ENCODE measurements at regions of chr20 and their contacts with region 1.

Region 1: GRCh38 chr20:3679749-3680700 is 1.8 kb downstream of the ADAM33 start:
- DNase-seq: no peak
- ATAC-seq: no peak
- H3K4me3 Mint-ChIP-seq: no peak overlapping the region
- H3K27ac Mint-ChIP-seq: no peak overlapping the region
- H3K4me1 Mint-ChIP-seq: peaks cover 7% of the 10 kb centered on the region
- H3K27me3 Mint-ChIP-seq: peaks cover 40% of the 10 kb centered on the region
- CTCF ChIP-seq: no peak

Region 2: DNA sequence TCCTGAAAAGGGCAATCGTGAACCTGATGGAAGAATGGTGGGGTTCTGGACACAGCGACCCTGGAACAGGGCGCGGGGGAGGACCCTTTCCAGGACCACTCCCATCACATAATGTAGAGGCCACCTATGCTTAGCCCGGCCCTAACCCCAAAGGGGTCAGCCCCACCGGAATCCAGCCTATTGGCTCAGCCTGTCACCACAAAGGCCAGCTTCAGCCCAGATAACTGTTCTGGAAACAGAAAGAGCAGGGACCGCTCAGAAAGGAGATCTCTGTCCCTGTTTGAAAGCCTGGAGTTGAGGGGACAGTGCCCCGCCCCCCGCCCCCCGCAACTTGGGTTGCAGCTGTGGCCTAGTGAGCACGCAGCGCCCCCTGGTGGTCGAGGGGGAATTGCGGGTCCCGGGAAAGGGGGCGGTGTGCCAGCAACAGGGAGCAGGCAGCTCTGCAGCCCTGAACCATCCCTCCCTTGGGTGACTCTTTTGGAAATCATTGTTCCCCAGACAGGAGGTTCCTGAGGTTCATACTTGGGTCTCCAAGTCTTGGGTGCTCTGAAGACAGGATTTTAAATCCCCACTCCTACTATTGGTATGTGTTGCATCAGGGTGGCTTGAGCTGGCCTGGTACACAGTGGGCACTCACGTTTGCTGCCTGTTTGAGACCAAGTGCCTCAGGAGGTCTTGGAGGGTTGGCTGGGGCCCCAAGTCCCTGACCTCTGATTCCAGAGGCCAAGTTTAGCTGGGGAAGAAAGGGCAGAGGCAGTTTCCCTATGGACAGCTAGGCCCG is 30.9 kb after region 1 on chr20:
- CTCF ChIA-PET with region 1: interaction called, 8 read pairs
- POLR2A ChIA-PET with region 1: no interaction called
- intact Hi-C with region 1: loop called (anchors 1 kb)
- DNase-seq: peak; percentile 65
- ATAC-seq: peak; percentile 42
- H3K4me3 Mint-ChIP-seq: no peak overlapping the region
- H3K27ac Mint-ChIP-seq: no peak overlapping the region
- H3K4me1 Mint-ChIP-seq: no peaks in the 10 kb centered on the region
- H3K27me3 Mint-ChIP-seq: peaks cover 4% of the 10 kb centered on the region
- CTCF ChIP-seq: peak; percentile 61

Region 3: GRCh38 chr20:4592316-4593148 is 912.5 kb after region 1 on chr20:
- CTCF ChIA-PET with region 1: no interaction called
- POLR2A ChIA-PET with region 1: no interaction called
- intact Hi-C with region 1: loop called (anchors 1 kb)
- DNase-seq: peak; percentile 67
- ATAC-seq: peak; percentile 80
- H3K4me3 Mint-ChIP-seq: peak overlapping the region; percentile 56
- H3K27ac Mint-ChIP-seq: no peak overlapping the region
- H3K4me1 Mint-ChIP-seq: peaks cover 10% of the 10 kb centered on the region
- H3K27me3 Mint-ChIP-seq: peaks cover 19% of the 10 kb centered on the region
- CTCF ChIP-seq: peak; percentile 94

Measured in activated B cell treated with CpG ODN at 0.5 μM for 24 hours (primary cell).